Ascending aorta (tissue), 2 donors: ENCODE measurements at regions of chr4 and their contacts with region 1.

Region 1: GRCh38 chr4:41024556-41025491 is 189.5 kb downstream of the APBB2 start:
- DNase-seq: no peak
- H3K4me3 ChIP-seq: no peak overlapping the region
- H3K27ac ChIP-seq: no peak overlapping the region
- H3K4me1 ChIP-seq: peaks cover 0 to 7% of the 10 kb centered on the region in 2 donors
- H3K27me3 ChIP-seq: no peaks in the 10 kb centered on the region
- CTCF ChIP-seq: no peak

Region 2: DNA sequence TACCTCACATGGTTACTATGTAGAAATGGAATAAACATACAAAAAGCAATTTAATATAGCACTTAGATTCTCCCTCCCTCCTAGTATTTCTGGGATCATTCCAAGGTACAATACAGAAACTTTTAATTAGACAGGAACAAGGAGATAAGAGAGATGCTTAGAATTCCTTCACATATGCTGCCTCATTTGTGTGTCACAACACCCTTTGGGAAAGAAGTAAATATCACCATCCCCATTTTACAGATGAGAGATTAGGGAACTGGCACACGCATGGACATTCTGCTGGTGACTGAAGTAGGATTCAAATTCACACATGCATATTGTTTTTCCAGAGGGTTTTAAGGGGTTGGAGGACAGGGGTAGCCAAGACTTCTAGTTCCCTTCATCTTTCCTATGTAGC is 25.3 kb after region 1 on chr4:
- intact Hi-C with region 1: no loop called
- DNase-seq: no peak
- H3K4me3 ChIP-seq: no peak overlapping the region
- H3K27ac ChIP-seq: peak overlapping the region in 1 of 2 donors; percentile 47
- H3K4me1 ChIP-seq: no peaks in the 10 kb centered on the region
- H3K27me3 ChIP-seq: no peaks in the 10 kb centered on the region
- CTCF ChIP-seq: no peak

Region 3: DNA sequence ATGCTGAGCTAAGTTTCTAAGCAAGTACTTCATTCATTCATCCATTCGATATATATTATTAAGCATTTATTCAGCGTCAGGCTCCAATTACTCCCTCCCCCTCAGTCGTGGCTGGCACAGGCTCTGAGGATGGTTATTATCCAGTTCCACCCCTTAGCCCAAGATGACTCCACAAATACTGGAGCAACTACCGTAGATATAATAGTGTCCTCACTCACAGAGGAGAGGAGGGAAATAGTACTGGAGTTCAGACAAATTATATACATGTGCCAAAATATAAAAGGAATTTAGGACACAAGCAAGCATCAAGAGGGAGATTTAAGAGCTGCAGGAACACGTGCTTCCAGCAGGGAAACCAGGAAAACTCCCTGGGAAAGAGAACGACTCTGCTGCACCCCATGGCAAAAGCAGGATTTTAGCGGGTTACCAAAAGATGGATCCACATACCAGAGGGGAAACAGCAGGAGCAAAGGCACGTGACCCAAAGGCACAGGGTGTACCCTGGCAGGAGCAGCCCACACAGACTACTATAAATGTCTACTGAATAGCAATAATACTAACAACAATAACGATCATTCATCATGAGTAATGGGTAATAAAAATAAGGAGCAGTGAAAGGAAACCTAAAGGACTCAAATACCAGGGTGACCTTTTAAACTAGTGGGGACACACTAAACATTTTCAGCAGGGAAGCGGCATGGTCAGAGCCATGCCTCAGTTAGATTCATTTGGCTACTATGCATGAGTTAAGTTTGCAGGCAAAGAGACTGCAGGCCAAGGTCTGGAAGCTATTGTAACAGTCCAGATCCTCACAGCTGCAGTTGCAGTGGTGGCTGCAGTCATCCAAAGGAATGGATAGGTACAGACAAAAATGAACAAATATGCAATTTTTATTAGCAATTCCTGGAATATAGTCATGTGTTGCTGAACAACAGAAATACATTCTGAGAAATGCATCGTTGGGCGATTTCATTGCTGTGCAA is 35.8 kb after region 1 on chr4:
- intact Hi-C with region 1: loop called (anchors 2 kb)
- DNase-seq: no peak
- H3K4me3 ChIP-seq: peak overlapping the region in 1 of 2 donors; percentile 0
- H3K27ac ChIP-seq: peak overlapping the region in 1 of 2 donors; percentile 55
- H3K4me1 ChIP-seq: peaks cover 2 to 40% of the 10 kb centered on the region in 2 donors
- H3K27me3 ChIP-seq: no peaks in the 10 kb centered on the region
- CTCF ChIP-seq: no peak